Caco-2 (cell line): ENCODE measurements at regions of chr3 and their contacts with region 1.

Region 1: GRCh38 chr3:185733980-185734724 is 90.7 kb downstream of the IGF2BP2 start:
- DNase-seq: peak; percentile 73 to 78
- H3K4me3 ChIP-seq: no peak overlapping the region
- H3K4me3 Mint-ChIP-seq: no peak overlapping the region
- H3K27ac Mint-ChIP-seq: no peak overlapping the region
- H3K4me1 ChIP-seq: peaks cover 17% of the 10 kb centered on the region
- H3K4me1 Mint-ChIP-seq: peaks cover 26% of the 10 kb centered on the region
- H3K27me3 ChIP-seq: no peaks in the 10 kb centered on the region
- H3K27me3 Mint-ChIP-seq: no peaks in the 10 kb centered on the region
- CTCF ChIP-seq: peak; percentile 64 to 74

Region 2: DNA sequence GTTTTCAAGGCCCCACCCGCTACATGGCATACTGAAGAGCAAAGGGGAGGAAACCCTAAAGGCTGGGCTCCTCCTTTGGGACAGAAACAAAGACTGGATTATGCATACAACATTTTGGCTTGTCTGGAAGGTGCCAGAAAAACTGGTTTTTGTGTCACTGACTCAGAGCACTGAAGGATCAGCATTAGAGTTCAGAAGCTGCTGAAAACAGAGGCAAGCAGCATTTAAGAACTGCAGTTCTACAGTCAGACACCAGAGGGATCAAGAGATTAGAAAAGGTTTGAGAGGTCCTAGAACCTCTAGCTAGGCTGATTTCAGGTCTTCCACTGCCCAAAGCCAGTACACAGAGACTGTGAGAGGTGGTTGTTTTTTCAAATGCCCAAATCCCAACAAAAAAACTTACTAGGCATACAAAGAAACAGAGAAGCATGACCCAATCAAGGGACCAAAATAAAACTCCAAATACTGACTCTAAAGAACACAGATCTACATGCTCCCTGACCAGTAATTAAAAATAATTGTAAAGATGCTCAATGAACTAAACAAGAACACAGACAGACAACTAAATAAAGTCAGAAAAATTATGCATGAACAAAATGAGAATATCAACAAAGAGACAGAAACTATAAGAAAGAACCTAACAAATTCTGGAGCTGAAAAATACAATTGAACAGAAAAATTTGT is 56.9 kb before region 1 on chr3:
- CTCF ChIA-PET with region 1: interaction called, 3 read pairs
- POLR2A ChIA-PET with region 1: no interaction called
- intact Hi-C with region 1: loop called (anchors 1 kb)
- DNase-seq: peak in 1 of 2 experiments; percentile 69
- H3K4me3 ChIP-seq: no peak overlapping the region
- H3K4me3 Mint-ChIP-seq: no peak overlapping the region
- H3K27ac Mint-ChIP-seq: no peak overlapping the region
- H3K4me1 ChIP-seq: no peaks in the 10 kb centered on the region
- H3K4me1 Mint-ChIP-seq: no peaks in the 10 kb centered on the region
- H3K27me3 ChIP-seq: no peaks in the 10 kb centered on the region
- H3K27me3 Mint-ChIP-seq: no peaks in the 10 kb centered on the region
- CTCF ChIP-seq: peak; percentile 67 to 76

Region 3: GRCh38 chr3:185764163-185764979 is 30.2 kb after region 1 on chr3:
- CTCF ChIA-PET with region 1: interaction called, 21 read pairs
- POLR2A ChIA-PET with region 1: no interaction called
- intact Hi-C with region 1: loop called (anchors 1 kb)
- DNase-seq: no peak
- H3K4me3 ChIP-seq: no peak overlapping the region
- H3K4me3 Mint-ChIP-seq: no peak overlapping the region
- H3K27ac Mint-ChIP-seq: no peak overlapping the region
- H3K4me1 ChIP-seq: no peaks in the 10 kb centered on the region
- H3K4me1 Mint-ChIP-seq: peaks cover 19% of the 10 kb centered on the region
- H3K27me3 ChIP-seq: no peaks in the 10 kb centered on the region
- H3K27me3 Mint-ChIP-seq: no peaks in the 10 kb centered on the region
- CTCF ChIP-seq: no peak

Region 4: DNA sequence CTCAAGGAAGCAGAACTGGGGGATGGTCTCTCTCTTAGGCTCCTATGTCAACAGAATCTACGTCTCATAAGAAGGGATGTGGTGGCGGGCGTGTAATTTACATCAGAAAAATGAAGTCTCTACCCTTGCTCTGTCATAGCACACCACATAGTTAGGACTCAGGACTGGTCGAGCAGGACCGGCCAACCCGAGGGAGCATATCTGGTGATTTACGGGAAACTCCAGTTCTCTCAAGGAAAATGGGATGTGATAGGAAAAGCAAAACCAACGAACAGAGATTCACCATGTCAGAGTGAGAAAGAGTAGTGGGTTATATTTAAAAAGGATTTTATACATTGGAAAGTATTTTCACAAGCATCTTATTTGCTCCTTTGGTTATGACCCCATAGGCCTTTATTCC is 36.0 kb after region 1 on chr3:
- CTCF ChIA-PET with region 1: interaction called, 21 read pairs
- POLR2A ChIA-PET with region 1: interaction called, 3 read pairs
- intact Hi-C with region 1: loop called (anchors 1 kb)
- DNase-seq: no peak
- H3K4me3 ChIP-seq: no peak overlapping the region
- H3K4me3 Mint-ChIP-seq: no peak overlapping the region
- H3K27ac Mint-ChIP-seq: no peak overlapping the region
- H3K4me1 ChIP-seq: no peaks in the 10 kb centered on the region
- H3K4me1 Mint-ChIP-seq: peaks cover 19% of the 10 kb centered on the region
- H3K27me3 ChIP-seq: no peaks in the 10 kb centered on the region
- H3K27me3 Mint-ChIP-seq: no peaks in the 10 kb centered on the region
- CTCF ChIP-seq: no peak

Region 5: GRCh38 chr3:185824476-185825378 is 90.6 kb after region 1 on chr3 and contains the start of gene IGF2BP2:
- CTCF ChIA-PET with region 1: interaction called, 3 read pairs
- POLR2A ChIA-PET with region 1: no interaction called
- intact Hi-C with region 1: loop called (anchors 1 kb)
- DNase-seq: peak; percentile 88 to 91
- H3K4me3 ChIP-seq: peak within 1 kb of the TSS; percentile 94
- H3K4me3 Mint-ChIP-seq: peak within 1 kb of the TSS; percentile 85
- H3K27ac Mint-ChIP-seq: peak within 1 kb of the TSS; percentile 98
- H3K4me1 ChIP-seq: peaks cover 23% of the 10 kb centered on the region
- H3K4me1 Mint-ChIP-seq: peaks cover 19% of the 10 kb centered on the region
- H3K27me3 ChIP-seq: no peaks in the 10 kb centered on the region
- H3K27me3 Mint-ChIP-seq: no peaks in the 10 kb centered on the region
- CTCF ChIP-seq: peak in 1 of 2 experiments; percentile 8
- total RNA-seq, gene IGF2BP2: 75.9 and 80.8 TPM in 2 replicates

Region 6: DNA sequence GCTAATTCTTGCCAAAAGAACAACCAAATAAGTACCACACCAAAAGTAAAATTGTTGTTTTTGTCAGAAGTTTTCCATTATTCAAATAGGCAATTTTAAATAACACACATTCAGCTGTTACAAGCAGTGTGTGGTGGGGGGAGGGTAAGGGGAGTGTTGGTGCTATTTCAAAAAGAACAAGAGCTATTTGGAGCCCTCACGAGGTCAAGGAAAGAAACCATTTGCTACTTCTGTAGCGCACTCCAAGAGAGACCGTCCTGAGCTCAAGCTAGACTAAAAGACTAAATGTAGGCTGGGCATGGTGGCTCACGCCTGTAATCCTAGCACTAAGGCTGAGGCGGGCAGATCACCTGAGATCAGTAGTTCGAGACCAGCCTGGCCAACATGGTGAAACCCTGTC is 111.9 kb after region 1 on chr3:
- CTCF ChIA-PET with region 1: no interaction called
- POLR2A ChIA-PET with region 1: no interaction called
- intact Hi-C with region 1: no loop called
- DNase-seq: no peak
- H3K4me3 ChIP-seq: no peak overlapping the region
- H3K4me3 Mint-ChIP-seq: no peak overlapping the region
- H3K27ac Mint-ChIP-seq: no peak overlapping the region
- H3K4me1 ChIP-seq: no peaks in the 10 kb centered on the region
- H3K4me1 Mint-ChIP-seq: peaks cover 3% of the 10 kb centered on the region
- H3K27me3 ChIP-seq: no peaks in the 10 kb centered on the region
- H3K27me3 Mint-ChIP-seq: no peaks in the 10 kb centered on the region
- CTCF ChIP-seq: no peak

Region 7: GRCh38 chr3:185900226-185900625 is 166.1 kb after region 1 on chr3:
- CTCF ChIA-PET with region 1: interaction called, 5 read pairs
- POLR2A ChIA-PET with region 1: no interaction called
- intact Hi-C with region 1: loop called (anchors 5 kb)
- DNase-seq: no peak
- H3K4me3 ChIP-seq: no peak overlapping the region
- H3K4me3 Mint-ChIP-seq: no peak overlapping the region
- H3K27ac Mint-ChIP-seq: no peak overlapping the region
- H3K4me1 ChIP-seq: no peaks in the 10 kb centered on the region
- H3K4me1 Mint-ChIP-seq: no peaks in the 10 kb centered on the region
- H3K27me3 ChIP-seq: no peaks in the 10 kb centered on the region
- H3K27me3 Mint-ChIP-seq: no peaks in the 10 kb centered on the region
- CTCF ChIP-seq: no peak